H1 (cell line): ENCODE measurements at regions of chr2 and their contacts with region 1.

Region 1: DNA sequence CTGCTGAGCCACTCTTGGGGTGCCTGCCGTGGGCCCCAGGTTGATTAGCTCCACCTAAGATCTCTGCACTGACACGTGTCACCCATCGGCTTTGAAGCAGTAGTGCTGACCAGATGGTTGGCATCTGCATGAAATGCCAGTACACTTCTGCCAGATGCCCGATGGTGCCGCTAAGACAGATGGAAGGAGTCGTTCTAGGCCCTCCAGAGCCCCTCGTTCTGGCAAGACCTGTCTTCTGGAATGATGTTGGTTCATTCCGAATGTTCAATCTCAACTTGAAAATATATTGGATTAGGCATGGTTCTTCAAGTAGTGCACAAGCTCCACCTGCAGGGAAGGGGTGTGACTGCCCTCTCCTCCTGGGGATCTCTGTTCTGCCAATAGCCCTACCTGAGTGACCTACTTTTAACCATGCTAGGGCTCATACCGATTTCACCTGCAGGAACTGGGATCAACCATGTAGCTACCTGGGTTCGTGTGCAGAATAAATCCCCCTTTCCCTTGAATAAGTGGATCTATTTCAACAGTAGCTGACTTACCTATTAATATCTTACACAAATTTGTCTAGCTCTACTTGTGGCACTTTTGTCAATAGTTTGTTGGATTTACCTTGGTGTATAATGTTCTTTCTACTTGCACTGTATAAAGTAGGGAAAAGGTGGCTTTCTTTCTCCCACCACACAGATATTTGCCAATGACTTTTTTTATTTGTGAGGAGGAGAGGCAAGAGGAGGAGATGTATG is 342.6 kb downstream of the CTNNA2 start:
- DNase-seq: peak; percentile 33 to 59
- H3K4me3 ChIP-seq: no peak overlapping the region
- H3K27ac ChIP-seq: no peak overlapping the region
- H3K4me1 ChIP-seq: peaks cover 0 to 8% (median 2%) of the 10 kb centered on the region in 4 experiments; a peak in 3 of 7 replicates
- H3K27me3 ChIP-seq: no peaks in the 10 kb centered on the region
- CTCF ChIP-seq: peak; percentile 67 to 87 (median 75)
- EP300 ChIP-seq: no peak
- POLR2A ChIP-seq: no peak
- RAD21 ChIP-seq: peak; percentile 92 to 93

Region 2: GRCh38 chr2:79235135-79235534 is 620.3 kb before region 1 on chr2:
- CTCF ChIA-PET with region 1: interaction called, 32 read pairs
- POLR2A ChIA-PET with region 1: no interaction called
- DNase-seq: no peak
- H3K4me3 ChIP-seq: no peak overlapping the region
- H3K27ac ChIP-seq: no peak overlapping the region
- H3K4me1 ChIP-seq: no peaks in the 10 kb centered on the region
- H3K27me3 ChIP-seq: no peaks in the 10 kb centered on the region
- CTCF ChIP-seq: peak in 2 of 3 experiments; percentile 62 to 69; a peak in 3 of 4 replicates
- EP300 ChIP-seq: no peak
- POLR2A ChIP-seq: no peak
- RAD21 ChIP-seq: peak; percentile 76 to 79

Region 3: DNA sequence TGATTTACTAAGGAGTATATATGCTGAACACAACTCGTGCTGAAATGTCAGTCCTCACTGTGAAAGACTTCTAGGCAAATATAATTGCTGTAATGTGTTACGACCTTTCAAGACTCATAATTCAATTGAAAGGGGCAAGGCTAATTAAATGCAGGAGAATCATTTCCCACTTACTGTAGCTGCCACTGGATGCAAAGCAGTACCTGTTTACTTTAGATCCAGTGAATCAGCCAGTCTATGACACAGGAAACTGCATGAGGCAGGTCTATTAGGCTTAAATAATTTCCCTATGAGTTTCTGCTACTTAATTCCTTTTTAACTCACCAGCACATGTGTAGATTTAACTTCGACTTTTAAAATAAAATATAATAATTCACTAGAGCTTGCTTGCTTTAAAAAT is 217.0 kb before region 1 on chr2:
- CTCF ChIA-PET with region 1: interaction called, 10 read pairs
- POLR2A ChIA-PET with region 1: no interaction called
- DNase-seq: no peak
- H3K4me3 ChIP-seq: no peak overlapping the region
- H3K27ac ChIP-seq: no peak overlapping the region
- H3K4me1 ChIP-seq: peaks cover 0 to 9% (median 1%) of the 10 kb centered on the region in 4 experiments; a peak in 4 of 7 replicates
- H3K27me3 ChIP-seq: no peaks in the 10 kb centered on the region
- CTCF ChIP-seq: no peak
- EP300 ChIP-seq: no peak
- POLR2A ChIP-seq: no peak
- RAD21 ChIP-seq: no peak

Region 4: DNA sequence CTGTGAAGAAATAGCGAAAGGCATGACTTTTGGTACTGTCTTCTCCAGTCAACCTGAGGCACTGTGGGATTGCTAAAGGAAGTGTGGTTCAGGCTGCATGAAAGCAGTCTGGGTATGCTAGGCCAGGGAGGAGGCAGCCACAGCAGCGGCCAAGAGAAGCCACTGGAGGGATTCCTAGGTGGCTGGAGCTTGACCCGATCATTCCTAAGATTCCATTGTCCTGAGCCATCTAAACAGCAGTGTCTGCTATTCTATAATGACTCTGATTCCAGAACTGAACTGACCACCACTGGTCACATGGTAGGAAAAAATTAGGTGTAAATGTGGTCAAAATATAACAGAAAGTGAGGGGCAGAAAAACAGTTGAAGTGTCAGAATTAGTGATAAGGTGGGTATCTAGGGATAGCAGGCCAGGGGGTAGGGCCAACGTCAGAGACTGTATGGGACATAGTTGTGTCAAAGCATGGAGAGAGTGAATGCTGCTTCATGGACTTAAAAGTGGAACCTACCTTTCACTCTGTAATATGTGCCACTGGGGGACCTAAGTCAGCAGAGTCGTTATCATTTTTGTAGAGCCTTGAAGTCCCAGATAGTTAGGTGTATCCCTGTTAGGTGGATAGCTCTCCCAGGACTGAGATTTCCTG is 137.9 kb before region 1 on chr2:
- CTCF ChIA-PET with region 1: interaction called, 17 read pairs
- POLR2A ChIA-PET with region 1: interaction called, 3 read pairs
- DNase-seq: peak in 1 of 2 experiments; percentile 7
- H3K4me3 ChIP-seq: no peak overlapping the region
- H3K27ac ChIP-seq: no peak overlapping the region
- H3K4me1 ChIP-seq: peaks cover 0 to 4% (median 1%) of the 10 kb centered on the region in 4 experiments; a peak in 1 of 7 replicates
- H3K27me3 ChIP-seq: no peaks in the 10 kb centered on the region
- CTCF ChIP-seq: no peak
- EP300 ChIP-seq: no peak
- POLR2A ChIP-seq: no peak
- RAD21 ChIP-seq: no peak

Region 5: DNA sequence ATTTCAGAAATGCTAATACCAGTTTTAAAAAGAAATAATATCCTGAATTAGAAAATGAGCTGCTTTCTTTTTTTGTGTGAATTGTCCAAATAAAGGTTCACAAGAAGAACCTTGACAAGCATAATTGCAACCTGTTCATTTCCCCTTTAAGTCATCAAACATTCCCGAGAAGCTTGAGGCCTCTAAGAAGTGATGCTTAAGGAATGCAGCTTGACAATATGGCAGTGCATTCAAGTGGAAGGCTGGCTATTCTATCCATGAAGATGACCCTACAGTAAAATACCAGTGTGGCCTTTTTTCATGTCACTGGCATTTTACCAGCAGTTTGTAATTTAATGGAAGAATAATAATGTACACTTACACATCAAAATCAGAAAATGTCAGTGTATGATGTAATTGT is 125.9 kb before region 1 on chr2:
- CTCF ChIA-PET with region 1: no interaction called
- POLR2A ChIA-PET with region 1: no interaction called
- DNase-seq: no peak
- H3K4me3 ChIP-seq: no peak overlapping the region
- H3K27ac ChIP-seq: no peak overlapping the region
- H3K4me1 ChIP-seq: no peaks in the 10 kb centered on the region
- H3K27me3 ChIP-seq: no peaks in the 10 kb centered on the region
- CTCF ChIP-seq: no peak
- EP300 ChIP-seq: no peak
- POLR2A ChIP-seq: no peak
- RAD21 ChIP-seq: no peak

Region 6: DNA sequence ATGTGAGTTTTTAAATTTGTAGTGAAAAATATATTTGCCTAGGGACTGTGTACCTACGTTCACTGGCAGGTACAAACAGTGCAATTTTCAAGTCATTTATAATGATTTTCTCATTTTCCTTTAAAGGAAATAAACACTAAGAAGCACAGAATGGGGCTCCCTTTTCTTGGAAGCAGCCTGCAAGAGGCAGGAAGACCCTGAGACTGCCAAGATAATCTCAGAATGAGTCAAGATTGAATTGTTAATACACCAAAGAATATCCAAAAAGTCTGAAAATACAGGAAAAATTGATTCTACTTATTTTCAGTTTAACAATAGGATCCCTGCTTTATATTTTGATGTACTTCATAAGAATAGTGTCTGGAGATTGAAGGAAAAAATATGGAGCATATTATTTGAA is 11.4 kb before region 1 on chr2:
- CTCF ChIA-PET with region 1: interaction called, 29 read pairs
- POLR2A ChIA-PET with region 1: interaction called, 3 read pairs
- DNase-seq: no peak
- H3K4me3 ChIP-seq: no peak overlapping the region
- H3K27ac ChIP-seq: no peak overlapping the region
- H3K4me1 ChIP-seq: peaks cover 0 to 8% (median 3%) of the 10 kb centered on the region in 4 experiments; a peak in 2 of 7 replicates
- H3K27me3 ChIP-seq: no peaks in the 10 kb centered on the region
- CTCF ChIP-seq: no peak
- EP300 ChIP-seq: no peak
- POLR2A ChIP-seq: no peak
- RAD21 ChIP-seq: no peak